Caco-2 (cell line): ENCODE measurements at regions of chr14 and their contacts with region 1.

Region 1: GRCh38 chr14:53432378-53432802 is 279.3 kb upstream of the DDHD1 start:
- DNase-seq: peak; percentile 70 to 77
- H3K4me3 ChIP-seq: no peak overlapping the region
- H3K4me3 Mint-ChIP-seq: no peak overlapping the region
- H3K27ac Mint-ChIP-seq: no peak overlapping the region
- H3K4me1 ChIP-seq: peaks cover 26% of the 10 kb centered on the region
- H3K4me1 Mint-ChIP-seq: peaks cover 13% of the 10 kb centered on the region
- H3K27me3 ChIP-seq: no peaks in the 10 kb centered on the region
- H3K27me3 Mint-ChIP-seq: no peaks in the 10 kb centered on the region
- CTCF ChIP-seq: peak; percentile 76 to 78

Region 2: DNA sequence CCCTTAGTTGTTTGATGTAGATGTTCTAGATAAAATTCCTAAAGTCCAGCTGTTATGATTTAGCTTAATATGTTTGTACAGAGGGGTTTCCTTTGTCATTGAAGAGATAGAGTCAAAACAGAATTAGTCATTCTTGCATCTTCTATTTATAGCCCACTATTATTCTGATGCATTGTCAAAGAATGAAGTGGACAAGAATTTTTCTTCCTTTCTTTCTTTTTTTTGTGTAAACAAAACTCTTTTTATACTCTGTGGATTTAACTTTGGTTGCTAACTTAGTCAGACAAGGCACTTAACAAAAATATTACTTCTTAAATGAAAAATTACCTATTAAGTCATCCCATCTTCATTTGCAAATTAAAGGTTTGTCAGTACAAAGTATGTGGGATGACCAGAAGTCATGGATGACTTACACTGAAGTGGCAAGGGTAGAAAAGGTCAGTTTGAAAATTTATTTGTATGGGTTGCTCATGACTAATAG is 63.6 kb before region 1 on chr14:
- CTCF ChIA-PET with region 1: no interaction called
- POLR2A ChIA-PET with region 1: no interaction called
- intact Hi-C with region 1: no loop called
- DNase-seq: no peak
- H3K4me3 ChIP-seq: no peak overlapping the region
- H3K4me3 Mint-ChIP-seq: no peak overlapping the region
- H3K27ac Mint-ChIP-seq: no peak overlapping the region
- H3K4me1 ChIP-seq: no peaks in the 10 kb centered on the region
- H3K4me1 Mint-ChIP-seq: no peaks in the 10 kb centered on the region
- H3K27me3 ChIP-seq: no peaks in the 10 kb centered on the region
- H3K27me3 Mint-ChIP-seq: no peaks in the 10 kb centered on the region
- CTCF ChIP-seq: no peak

Region 3: GRCh38 chr14:53380052-53380866 is 52.1 kb before region 1 on chr14:
- CTCF ChIA-PET with region 1: no interaction called
- POLR2A ChIA-PET with region 1: no interaction called
- intact Hi-C with region 1: no loop called
- DNase-seq: no peak
- H3K4me3 ChIP-seq: no peak overlapping the region
- H3K4me3 Mint-ChIP-seq: no peak overlapping the region
- H3K27ac Mint-ChIP-seq: no peak overlapping the region
- H3K4me1 ChIP-seq: no peaks in the 10 kb centered on the region
- H3K4me1 Mint-ChIP-seq: peaks cover 4% of the 10 kb centered on the region
- H3K27me3 ChIP-seq: no peaks in the 10 kb centered on the region
- H3K27me3 Mint-ChIP-seq: peaks cover 4% of the 10 kb centered on the region
- CTCF ChIP-seq: no peak

Region 4: GRCh38 chr14:53412803-53413675 is 19.4 kb before region 1 on chr14:
- CTCF ChIA-PET with region 1: no interaction called
- POLR2A ChIA-PET with region 1: no interaction called
- intact Hi-C with region 1: no loop called
- DNase-seq: peak in 1 of 2 experiments; percentile 18
- H3K4me3 ChIP-seq: no peak overlapping the region
- H3K4me3 Mint-ChIP-seq: no peak overlapping the region
- H3K27ac Mint-ChIP-seq: no peak overlapping the region
- H3K4me1 ChIP-seq: no peaks in the 10 kb centered on the region
- H3K4me1 Mint-ChIP-seq: no peaks in the 10 kb centered on the region
- H3K27me3 ChIP-seq: no peaks in the 10 kb centered on the region
- H3K27me3 Mint-ChIP-seq: peaks cover under 1% of the 10 kb centered on the region
- CTCF ChIP-seq: peak; percentile 27 to 46

Region 5: DNA sequence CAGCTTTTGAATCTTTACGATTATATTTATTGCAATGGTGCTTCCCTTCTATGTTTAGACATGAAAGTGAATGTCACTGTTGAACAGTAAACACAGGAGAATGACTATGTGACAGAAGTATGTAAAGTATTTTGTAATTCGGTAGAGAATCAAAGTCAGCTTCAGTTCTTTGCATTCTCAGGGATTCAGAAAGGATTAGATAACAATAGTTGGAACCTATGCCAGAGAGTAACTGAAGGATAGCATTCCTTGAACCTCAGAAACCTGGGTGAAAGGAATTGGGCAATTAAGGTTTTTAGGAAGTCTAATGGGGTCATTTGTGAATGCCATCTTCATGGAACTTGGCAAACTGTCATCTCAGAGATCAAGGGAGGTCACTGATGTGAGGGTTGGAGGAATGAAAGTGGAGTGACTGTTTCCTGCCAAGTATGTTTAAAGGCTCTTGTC is 26.0 kb after region 1 on chr14:
- CTCF ChIA-PET with region 1: no interaction called
- POLR2A ChIA-PET with region 1: no interaction called
- intact Hi-C with region 1: loop called (anchors 1 kb)
- DNase-seq: peak; percentile 74 to 75
- H3K4me3 ChIP-seq: no peak overlapping the region
- H3K4me3 Mint-ChIP-seq: peak overlapping the region; percentile 29
- H3K27ac Mint-ChIP-seq: peak overlapping the region; percentile 43
- H3K4me1 ChIP-seq: peaks cover 48% of the 10 kb centered on the region
- H3K4me1 Mint-ChIP-seq: peaks cover 40% of the 10 kb centered on the region
- H3K27me3 ChIP-seq: no peaks in the 10 kb centered on the region
- H3K27me3 Mint-ChIP-seq: no peaks in the 10 kb centered on the region
- CTCF ChIP-seq: no peak

Region 6: DNA sequence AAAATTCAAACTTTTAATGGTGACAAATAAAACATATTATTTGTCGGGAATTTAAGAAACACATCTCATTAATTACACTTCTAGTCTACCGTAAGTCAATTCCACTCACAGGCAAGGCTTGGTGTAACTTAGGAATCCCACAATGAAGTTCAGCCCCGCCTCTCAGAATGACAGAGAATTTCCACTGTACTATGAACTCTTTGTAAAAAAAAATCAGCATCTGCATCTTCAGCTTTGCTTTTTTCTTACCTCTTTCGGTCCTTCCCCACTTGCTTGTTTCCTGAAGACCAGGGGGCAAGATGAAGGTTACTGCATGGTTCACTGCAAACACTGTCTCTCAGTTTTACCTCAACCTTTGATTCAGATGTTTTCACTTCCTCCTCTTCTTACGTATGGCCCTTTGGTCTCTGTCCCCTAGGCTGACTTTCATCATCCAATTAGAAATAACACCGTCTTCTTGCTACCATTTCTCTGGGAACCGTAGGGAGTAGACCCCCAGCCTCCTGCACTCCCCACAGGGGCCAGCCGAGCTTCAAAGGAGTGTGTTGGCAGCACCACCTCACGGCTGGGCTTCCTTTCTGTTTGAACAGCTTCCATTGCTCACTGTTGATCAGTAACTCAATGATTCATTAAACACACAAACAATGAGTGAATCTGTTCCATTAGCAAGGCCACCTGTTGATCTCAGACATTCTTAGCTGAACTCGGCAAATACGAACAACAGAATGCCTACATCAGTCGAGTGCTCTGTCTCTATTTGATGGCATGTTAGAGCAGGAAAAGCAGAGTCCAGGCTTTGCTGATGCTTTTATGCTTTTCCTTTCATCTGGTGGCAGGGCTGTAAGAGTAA is 181.2 kb after region 1 on chr14:
- CTCF ChIA-PET with region 1: interaction called, 3 read pairs
- POLR2A ChIA-PET with region 1: no interaction called
- intact Hi-C with region 1: loop called (anchors 2 kb)
- DNase-seq: peak; percentile 89 to 91
- H3K4me3 ChIP-seq: peak overlapping the region; percentile 41
- H3K4me3 Mint-ChIP-seq: peak overlapping the region; percentile 83
- H3K27ac Mint-ChIP-seq: peak overlapping the region; percentile 98
- H3K4me1 ChIP-seq: peaks cover 56% of the 10 kb centered on the region
- H3K4me1 Mint-ChIP-seq: peaks cover 17% of the 10 kb centered on the region
- H3K27me3 ChIP-seq: no peaks in the 10 kb centered on the region
- H3K27me3 Mint-ChIP-seq: no peaks in the 10 kb centered on the region
- CTCF ChIP-seq: peak in 1 of 2 experiments; percentile 32